ENCODE measurements at regions of chr14 and their contacts with region 1.

Region 1: DNA sequence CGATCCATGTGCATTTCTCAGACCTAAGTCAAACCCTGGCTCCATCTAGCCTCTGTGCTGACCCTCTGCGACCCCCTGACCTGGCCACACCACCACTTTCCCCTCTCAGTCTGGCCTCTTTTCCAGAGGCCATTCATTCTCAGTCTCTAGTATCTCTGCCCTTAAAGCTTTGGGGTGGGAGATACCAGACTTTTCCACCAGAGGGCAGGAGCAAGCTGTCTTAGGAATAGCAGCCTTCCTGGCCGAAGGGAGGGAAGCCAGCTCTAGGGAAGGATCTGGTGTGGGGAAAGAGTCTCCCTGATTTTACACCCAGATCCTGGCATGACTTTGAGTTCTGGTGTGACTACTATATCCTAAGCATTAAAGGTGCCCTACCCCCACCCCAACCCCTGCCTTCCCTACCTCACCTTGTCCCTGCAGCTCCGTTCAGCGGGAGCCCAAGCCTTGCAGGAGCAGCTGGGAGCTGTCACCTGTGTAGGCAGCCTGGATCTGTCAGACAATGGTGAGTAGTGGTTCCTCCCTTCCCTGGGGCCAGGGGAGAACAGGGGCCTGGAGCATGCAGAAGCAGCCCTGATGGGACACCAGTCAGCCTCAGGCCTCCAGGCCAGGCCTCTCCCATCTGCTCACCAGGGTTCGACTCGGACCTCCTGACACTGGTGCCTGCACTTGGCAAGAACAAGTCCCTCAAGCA is 6.6 kb downstream of the CARMIL3 start:
- DNase-seq: peak; percentile 58 to 60
- ATAC-seq: peak; percentile 93 to 96
- H3K4me3 ChIP-seq: no peak overlapping the region
- H3K27ac ChIP-seq: no peak overlapping the region
- H3K4me1 ChIP-seq: no peaks in the 10 kb centered on the region
- H3K27me3 ChIP-seq: peaks cover 0 to 3% (median 0%) of the 10 kb centered on the region in 3 donors
- CTCF ChIP-seq: peak; percentile 74 to 95 (median 88)
- POLR2A ChIP-seq: no peak

Region 2: DNA sequence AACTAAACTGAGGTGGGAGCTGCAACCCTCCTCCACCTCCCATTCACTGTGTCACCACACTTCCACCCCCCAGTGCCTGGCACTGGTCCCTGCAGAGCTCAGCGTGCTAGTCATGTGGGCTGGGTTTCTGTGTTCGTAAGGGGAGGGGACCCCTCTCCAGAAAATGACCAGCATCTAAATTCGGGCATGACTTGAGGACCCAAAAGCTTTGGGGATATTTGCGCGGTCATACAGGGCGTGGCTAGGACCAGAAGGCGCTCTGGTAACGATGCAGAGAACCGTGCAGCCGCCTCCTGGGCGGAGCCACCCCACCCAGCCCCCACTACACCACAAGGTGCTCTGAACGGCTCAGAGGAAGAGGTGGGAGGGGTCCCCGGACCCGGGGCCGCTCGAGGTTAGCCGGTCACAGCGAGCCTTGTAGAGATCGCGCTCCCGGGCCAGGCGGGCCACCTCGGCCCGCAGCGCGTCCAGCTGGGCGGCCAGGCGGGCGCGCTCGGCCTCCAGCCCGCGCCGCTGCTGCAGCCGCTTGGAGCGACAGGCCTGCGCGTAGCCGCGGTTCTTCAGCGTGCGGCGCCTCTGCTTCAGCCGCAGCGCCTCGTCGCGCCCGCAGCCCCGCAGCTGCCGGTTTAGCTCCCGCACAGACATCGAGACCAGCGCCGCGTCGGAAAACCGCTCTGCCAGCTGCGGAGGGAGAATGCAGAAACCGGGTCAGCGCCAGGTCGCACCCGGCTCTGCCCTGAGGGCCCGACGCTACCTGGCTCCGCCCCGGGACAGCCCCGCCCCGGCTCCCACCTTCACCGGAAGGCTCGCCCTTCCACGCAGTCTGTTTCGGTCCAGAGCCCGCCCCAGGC is 22.7 kb after region 1 on chr14:
- in situ Hi-C with region 1: no loop called
- intact Hi-C with region 1: no loop called
- DNase-seq: no peak
- ATAC-seq: peak; percentile 78 to 82
- H3K4me3 ChIP-seq: peak overlapping the region; percentile 54 to 76 (median 64)
- H3K27ac ChIP-seq: peak overlapping the region in 1 of 4 donors; percentile 23
- H3K4me1 ChIP-seq: peaks cover 0 to 10% of the 10 kb centered on the region in 2 donors
- H3K27me3 ChIP-seq: no peaks in the 10 kb centered on the region
- CTCF ChIP-seq: no peak
- POLR2A ChIP-seq: no peak

Region 3: GRCh38 chr14:24093901-24094761 is 35.7 kb after region 1 on chr14 and contains the start of gene PCK2:
- in situ Hi-C with region 1: loop called in 1 of 4 experiments (anchors 5 kb)
- intact Hi-C with region 1: loop called (anchors 1 kb)
- DNase-seq: peak; percentile 88 to 93
- ATAC-seq: peak; percentile 88 to 90
- H3K4me3 ChIP-seq: peak within 1 kb of the TSS; percentile 75 to 97 (median 90)
- H3K27ac ChIP-seq: peak within 1 kb of the TSS; percentile 83 to 88 (median 88)
- H3K4me1 ChIP-seq: peaks cover 10 to 14% of the 10 kb centered on the region in 2 donors
- H3K27me3 ChIP-seq: no peaks in the 10 kb centered on the region
- CTCF ChIP-seq: peak in 1 of 5 experiments; percentile 16
- POLR2A ChIP-seq: peak; percentile 53
- total RNA-seq, gene PCK2: 1.9 to 9.8 (median 3.6) TPM

Region 4: GRCh38 chr14:24108336-24108874 is 50.0 kb after region 1 on chr14:
- in situ Hi-C with region 1: loop called in 1 of 4 experiments (anchors 5 kb)
- intact Hi-C with region 1: loop called (anchors 1 kb)
- DNase-seq: no peak
- ATAC-seq: peak in 1 of 2 donors; percentile 15
- H3K4me3 ChIP-seq: no peak overlapping the region
- H3K27ac ChIP-seq: peak overlapping the region; percentile 2 to 55 (median 29)
- H3K4me1 ChIP-seq: peaks cover 9 to 12% of the 10 kb centered on the region in 2 donors
- H3K27me3 ChIP-seq: no peaks in the 10 kb centered on the region
- CTCF ChIP-seq: no peak
- POLR2A ChIP-seq: no peak

Region 5: GRCh38 chr14:24299255-24300195 is 241.1 kb after region 1 on chr14 and contains the starts of genes DHRS1 and NOP9:
- in situ Hi-C with region 1: no loop called
- intact Hi-C with region 1: no loop called
- DNase-seq: peak; percentile 68 to 85
- ATAC-seq: peak; percentile 90 to 95
- H3K4me3 ChIP-seq: peak within 1 kb of the TSS; percentile 82 to 97 (median 88)
- H3K27ac ChIP-seq: peak within 1 kb of the TSS; percentile 75 to 89 (median 88)
- H3K4me1 ChIP-seq: peaks cover 13 to 20% of the 10 kb centered on the region in 2 donors
- H3K27me3 ChIP-seq: no peaks in the 10 kb centered on the region
- CTCF ChIP-seq: peak in 1 of 5 experiments; percentile 3
- POLR2A ChIP-seq: peak; percentile 26 to 59
- total RNA-seq, gene DHRS1: 1.9 to 12.2 (median 8.2) TPM
- total RNA-seq, gene NOP9: 27.2 to 43.5 (median 32.2) TPM